ENCODE measurements at regions of chr2 and their contacts with region 1.

Region 1: DNA sequence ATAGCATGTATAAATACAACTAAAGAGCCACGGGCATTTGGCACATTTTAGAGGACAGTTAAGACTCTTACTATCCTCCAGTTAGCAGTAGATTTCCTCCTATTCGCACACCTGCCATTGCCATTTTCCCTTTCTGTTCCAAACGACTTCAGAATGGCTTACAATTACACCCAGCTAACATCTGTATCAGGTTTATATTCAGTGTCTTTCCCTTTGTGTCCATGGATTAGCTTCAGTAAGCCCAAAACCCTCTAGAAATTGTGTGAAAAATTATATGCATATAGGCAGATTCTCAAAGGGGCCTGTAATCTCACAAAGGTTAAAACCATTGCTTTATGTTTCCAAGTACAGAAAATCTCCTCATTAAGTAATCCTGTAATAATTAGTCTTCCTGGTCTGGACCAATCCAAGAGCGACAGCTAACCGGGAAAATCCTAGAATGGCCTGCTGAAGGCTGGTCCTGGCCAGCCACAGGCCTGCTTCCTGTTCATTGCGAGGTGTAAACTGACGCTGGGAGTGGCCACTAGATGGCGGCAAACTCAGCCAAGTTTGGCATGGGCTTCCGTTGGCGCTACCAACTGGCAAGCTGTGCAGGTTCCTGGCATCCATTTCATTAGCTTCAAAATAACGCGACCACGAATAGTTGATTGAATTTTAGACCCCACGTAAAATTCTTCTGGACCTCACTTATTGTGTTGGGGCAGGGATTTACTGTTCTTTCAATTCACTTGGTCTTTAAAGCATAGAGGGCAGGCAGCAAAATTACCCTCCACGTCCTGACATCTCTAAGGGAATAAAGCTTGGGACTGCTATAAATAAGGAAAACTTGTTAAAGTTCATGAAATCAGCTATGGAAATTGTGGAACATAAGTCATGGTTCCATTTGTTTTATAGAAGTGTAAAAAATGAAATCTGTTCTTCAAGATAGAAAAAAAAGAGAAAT is 17.1 kb downstream of the ARHGAP25 start:
- DNase-seq: peak; percentile 96
- ATAC-seq: peak; percentile 93
- H3K4me3 Mint-ChIP-seq: peak overlapping the region; percentile 20
- H3K27ac Mint-ChIP-seq: peak overlapping the region; percentile 84
- H3K4me1 Mint-ChIP-seq: peaks cover 87% of the 10 kb centered on the region
- H3K27me3 Mint-ChIP-seq: no peaks in the 10 kb centered on the region

Region 2: DNA sequence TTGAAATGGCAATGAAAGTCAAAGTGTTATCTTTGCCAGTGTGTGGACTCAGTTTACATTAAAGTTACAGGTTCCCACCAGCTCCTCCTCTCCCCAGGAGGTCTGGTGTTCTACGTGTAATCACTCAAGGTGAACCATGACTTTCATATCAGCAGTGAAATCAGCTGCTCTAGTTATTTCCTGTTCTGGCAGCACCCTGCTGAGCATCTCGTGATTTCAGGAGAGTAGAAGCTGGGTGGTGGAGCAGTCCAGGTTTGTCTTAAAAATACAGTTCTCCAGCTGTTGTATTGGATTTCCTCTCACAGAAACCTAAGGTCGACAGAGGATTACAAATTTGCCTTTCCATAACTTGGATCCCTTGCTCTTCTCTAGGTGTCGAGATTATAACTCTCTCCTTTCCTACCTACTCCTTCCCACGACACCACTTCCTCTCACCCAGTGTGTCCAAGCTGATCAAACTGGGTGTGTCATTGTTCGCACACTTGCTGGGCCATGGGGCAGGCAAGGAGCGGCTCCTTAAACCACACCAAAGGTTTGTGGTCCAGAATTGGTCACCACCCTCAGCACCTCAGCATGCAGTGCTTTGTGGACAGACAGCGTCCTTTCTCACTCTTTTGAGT is 30.1 kb before region 1 on chr2:
- CTCF ChIA-PET with region 1: interaction called, 261 read pairs
- POLR2A ChIA-PET with region 1: interaction called, 5 read pairs
- intact Hi-C with region 1: loop called in 1 of 2 experiments (anchors 5 kb)
- DNase-seq: peak; percentile 53
- ATAC-seq: peak; percentile 32
- H3K4me3 Mint-ChIP-seq: peak overlapping the region; percentile 53
- H3K27ac Mint-ChIP-seq: peak overlapping the region; percentile 89
- H3K4me1 Mint-ChIP-seq: peaks cover 86% of the 10 kb centered on the region
- H3K27me3 Mint-ChIP-seq: no peaks in the 10 kb centered on the region

Region 3: GRCh38 chr2:68734688-68735525 is 16.8 kb before region 1 on chr2 and contains the start of gene ARHGAP25:
- CTCF ChIA-PET with region 1: interaction called, 97 read pairs
- POLR2A ChIA-PET with region 1: no interaction called
- intact Hi-C with region 1: no loop called
- DNase-seq: peak; percentile 84
- ATAC-seq: peak; percentile 75
- H3K4me3 Mint-ChIP-seq: no peak within 1 kb of the TSS
- H3K27ac Mint-ChIP-seq: no peak within 1 kb of the TSS
- H3K4me1 Mint-ChIP-seq: peaks cover 40% of the 10 kb centered on the region
- H3K27me3 Mint-ChIP-seq: no peaks in the 10 kb centered on the region
- total RNA-seq, gene ARHGAP25: 57.9 to 73.2 TPM

Region 4: DNA sequence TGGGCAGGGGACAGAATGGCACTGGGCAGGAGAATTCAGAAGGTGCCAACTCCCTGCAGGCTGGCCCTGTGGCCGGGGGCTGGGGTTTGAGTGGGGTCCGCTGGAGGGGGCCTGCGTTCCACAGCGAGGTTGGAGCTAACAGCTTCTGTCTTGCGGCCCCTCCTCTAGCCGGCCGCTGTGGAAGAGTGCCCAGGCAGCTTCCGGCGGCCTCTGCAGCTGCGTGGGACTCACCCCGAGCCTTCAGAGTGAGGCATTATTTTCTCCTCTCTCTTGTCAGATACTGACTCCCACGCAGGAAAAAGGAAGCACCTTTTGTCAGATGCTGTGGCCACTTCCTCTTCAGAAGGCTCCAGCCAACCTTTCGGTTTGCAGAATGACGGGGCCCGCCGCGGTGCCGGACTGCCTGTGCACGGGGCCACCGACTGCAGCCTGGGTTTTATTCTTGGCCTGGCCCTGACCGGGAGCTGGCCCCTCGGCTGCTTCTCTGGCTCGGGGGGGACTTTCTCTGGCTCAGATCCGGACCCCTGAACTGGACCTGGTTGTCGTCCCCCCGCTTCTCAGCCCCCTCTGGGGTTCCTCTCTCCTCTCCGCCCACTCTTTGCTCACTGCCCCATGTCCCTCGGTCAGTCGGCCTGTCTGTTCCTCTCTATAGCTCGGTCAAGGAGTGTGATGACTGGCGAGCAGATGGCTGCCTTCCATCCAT is 23.1 kb after region 1 on chr2:
- CTCF ChIA-PET with region 1: interaction called, 23 read pairs
- POLR2A ChIA-PET with region 1: interaction called, 3 read pairs
- intact Hi-C with region 1: no loop called
- DNase-seq: peak; percentile 79
- ATAC-seq: peak; percentile 68
- H3K4me3 Mint-ChIP-seq: peak overlapping the region; percentile 71
- H3K27ac Mint-ChIP-seq: peak overlapping the region; percentile 99
- H3K4me1 Mint-ChIP-seq: peaks cover 84% of the 10 kb centered on the region
- H3K27me3 Mint-ChIP-seq: no peaks in the 10 kb centered on the region

Region 5: GRCh38 chr2:68837164-68837860 is 85.6 kb after region 1 on chr2:
- CTCF ChIA-PET with region 1: interaction called, 55 read pairs
- POLR2A ChIA-PET with region 1: no interaction called
- intact Hi-C with region 1: loop called (anchors 1 kb)
- DNase-seq: peak; percentile 84
- ATAC-seq: peak; percentile 45
- H3K4me3 Mint-ChIP-seq: no peak overlapping the region
- H3K27ac Mint-ChIP-seq: peak overlapping the region; percentile 79
- H3K4me1 Mint-ChIP-seq: peaks cover 39% of the 10 kb centered on the region
- H3K27me3 Mint-ChIP-seq: no peaks in the 10 kb centered on the region